ENCODE measurements at regions of chr10 and their contacts with region 1.

Region 1: DNA sequence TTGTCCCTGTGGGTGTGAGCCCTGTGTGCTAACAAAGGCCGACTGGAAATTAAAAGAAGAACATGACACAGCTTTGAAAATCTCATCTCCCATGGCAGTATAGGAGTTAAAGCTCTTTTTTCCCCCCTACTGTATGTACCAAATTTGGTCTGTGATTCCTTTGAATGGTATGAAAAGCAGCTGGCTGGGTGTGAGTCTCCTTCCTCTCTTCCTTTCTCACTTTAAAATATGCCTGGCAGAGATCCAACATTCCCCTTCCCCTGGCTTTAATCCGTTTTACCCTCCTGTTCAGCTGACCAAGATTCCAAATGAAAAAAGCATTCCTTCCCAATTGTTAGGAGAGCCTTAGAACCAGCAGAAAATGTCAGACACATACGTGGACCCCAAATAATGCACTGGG is 225.0 kb upstream of the CELF2 start:
- DNase-seq: no peak

Region 2: GRCh38 chr10:10872035-10872673 is 79.5 kb after region 1 on chr10:
- intact Hi-C with region 1: loop called (anchors 5 kb)
- DNase-seq: no peak

Region 3: DNA sequence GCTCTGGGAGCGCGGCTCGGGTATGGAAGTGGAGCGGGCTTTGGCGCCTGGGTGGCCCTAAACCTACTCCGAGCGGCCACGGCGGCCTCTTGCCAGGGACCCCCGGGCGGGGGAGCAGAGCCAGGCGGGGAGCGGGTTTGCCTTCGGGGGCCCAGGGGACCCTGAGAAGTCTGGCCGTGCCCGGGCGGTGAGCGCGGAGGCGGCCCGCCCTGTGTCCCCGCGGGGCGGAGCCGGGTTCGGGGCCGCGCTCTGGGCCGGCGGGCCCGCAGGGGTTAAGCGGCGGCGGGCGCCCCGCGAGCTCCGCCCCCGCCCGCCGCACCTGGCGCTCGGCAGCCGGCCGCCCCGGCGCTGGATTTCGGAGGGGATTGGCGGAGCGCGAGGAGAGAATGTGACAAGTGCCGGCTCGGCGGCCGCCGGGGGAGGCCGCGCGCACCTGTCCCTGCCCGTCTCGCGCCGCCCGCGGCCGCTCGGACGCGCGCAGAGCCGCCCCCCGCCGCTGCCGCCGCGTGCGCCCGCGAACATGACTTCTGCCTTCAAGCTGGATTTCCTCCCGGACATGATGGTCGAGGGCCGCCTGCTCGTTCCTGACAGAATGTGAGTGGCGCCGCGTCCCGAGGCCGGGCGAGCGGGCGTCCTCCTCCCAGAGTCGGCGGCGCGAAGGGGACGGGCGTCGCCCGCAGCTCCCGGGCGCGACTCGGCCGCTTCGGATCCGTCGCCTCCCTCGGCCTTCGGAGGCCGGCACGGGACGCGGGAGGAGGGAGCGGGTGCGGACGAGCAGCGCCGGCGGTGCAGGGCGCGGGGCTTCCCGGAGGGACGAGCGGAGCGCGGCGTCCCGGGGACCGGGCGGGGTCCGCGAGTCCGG is 225.1 kb after region 1 on chr10 and contains the start of gene CELF2:
- intact Hi-C with region 1: loop called (anchors 10 kb)
- DNase-seq: peak; percentile 84
- total RNA-seq, gene CELF2: 67.5 TPM

Measured in cardiac septum (tissue), 1 donor.